Panc1 (cell line): ENCODE measurements at regions of chr22 and their contacts with region 1.

Region 1: GRCh38 chr22:30733181-30733631 is 38.5 kb downstream of the OSBP2 start:
- DNase-seq: no peak
- ATAC-seq: no peak
- H3K4me3 ChIP-seq: no peak overlapping the region
- H3K27ac ChIP-seq: no peak overlapping the region
- H3K4me1 ChIP-seq: no peaks in the 10 kb centered on the region
- H3K27me3 ChIP-seq: no peaks in the 10 kb centered on the region
- CTCF ChIP-seq: no peak

Region 2: DNA sequence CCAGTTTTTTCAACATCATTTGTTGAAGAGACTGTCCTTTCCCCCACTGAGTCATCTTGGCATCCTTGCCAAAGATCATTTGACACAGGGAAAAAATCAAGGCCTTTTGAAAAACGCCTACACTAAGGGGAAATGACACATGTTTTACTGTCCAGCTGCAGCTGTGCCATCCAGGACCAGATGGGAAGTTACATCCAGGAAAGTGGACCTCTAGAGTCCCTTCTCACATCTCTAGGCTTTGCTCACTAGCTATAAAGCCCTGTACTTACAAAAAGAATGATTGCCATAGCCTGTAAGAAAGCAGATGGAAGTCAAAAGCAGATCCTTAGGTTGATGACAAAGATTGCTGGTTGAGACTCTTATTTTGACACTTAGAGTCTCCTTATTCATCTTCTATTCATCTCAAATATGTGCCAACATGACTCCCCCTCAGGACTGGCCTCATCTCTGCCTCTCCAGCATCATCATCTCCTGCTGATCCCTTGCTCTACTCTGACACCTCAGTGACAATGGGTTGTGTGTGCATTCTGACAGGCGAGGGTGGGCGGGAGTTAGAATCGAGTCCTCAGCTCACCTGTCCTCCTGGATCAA is 15.8 kb before region 1 on chr22:
- CTCF ChIA-PET with region 1: no interaction called
- POLR2A ChIA-PET with region 1: interaction called, 10 read pairs
- in situ Hi-C with region 1: no loop called
- intact Hi-C with region 1: no loop called
- DNase-seq: no peak
- ATAC-seq: no peak
- H3K4me3 ChIP-seq: no peak overlapping the region
- H3K27ac ChIP-seq: no peak overlapping the region
- H3K4me1 ChIP-seq: no peaks in the 10 kb centered on the region
- H3K27me3 ChIP-seq: no peaks in the 10 kb centered on the region
- CTCF ChIP-seq: no peak